ENCODE measurements at regions of chr20 and their contacts with region 1.

Region 1: GRCh38 chr20:39049684-39050554 is 87.8 kb downstream of the DHX35 start:
- DNase-seq: peak in 1 of 2 experiments; percentile 75
- H3K4me3 ChIP-seq: peak overlapping the region; percentile 97
- H3K27ac ChIP-seq: no peak overlapping the region
- H3K4me1 ChIP-seq: 0 out of 2 replicates have a peak, but pooled peaks cover 6% of the 10 kb centered on the region
- H3K27me3 ChIP-seq: peaks cover 20% of the 10 kb centered on the region; the same call in 1 of the 2 replicates
- CTCF ChIP-seq: peak; percentile 96

Region 2: DNA sequence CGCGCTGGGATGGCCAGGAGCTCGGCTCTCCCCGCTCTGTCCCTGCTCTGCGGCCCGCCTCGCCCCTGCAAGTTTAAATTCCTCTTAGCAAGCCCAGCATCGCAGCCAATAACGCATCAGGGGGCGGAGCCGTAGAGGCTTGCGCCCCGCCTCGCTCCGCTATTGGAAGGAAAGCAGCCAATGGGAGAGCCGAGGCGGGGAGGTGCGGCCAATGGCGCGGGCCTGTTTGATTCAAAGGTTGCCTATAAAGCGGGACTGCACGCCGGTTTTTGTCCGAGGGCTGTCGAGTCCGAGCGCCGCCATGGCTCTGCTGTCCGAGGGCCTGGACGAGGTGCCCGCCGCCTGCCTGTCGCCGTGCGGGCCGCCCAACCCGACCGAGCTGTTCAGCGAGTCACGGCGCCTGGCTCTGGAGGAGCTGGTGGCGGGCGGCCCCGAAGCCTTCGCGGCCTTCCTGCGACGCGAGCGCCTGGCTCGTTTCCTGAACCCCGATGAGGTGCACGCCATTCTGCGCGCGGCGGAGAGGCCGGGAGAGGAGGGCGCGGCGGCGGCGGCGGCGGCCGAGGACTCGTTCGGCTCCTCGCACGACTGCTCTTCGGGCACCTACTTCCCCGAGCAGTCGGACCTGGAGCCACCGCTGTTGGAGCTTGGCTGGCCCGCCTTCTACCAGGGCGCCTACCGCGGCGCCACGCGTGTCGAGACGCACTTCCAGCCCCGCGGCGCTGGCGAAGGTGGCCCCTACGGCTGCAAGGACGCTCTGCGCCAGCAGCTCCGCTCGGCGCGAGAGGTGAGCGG is 123.6 kb before region 1 on chr20 and contains the start of gene FAM83D:
- CTCF ChIA-PET with region 1: no interaction called
- POLR2A ChIA-PET with region 1: no interaction called
- intact Hi-C with region 1: loop called (anchors 1 kb)
- DNase-seq: peak; percentile 97 to 98
- H3K4me3 ChIP-seq: peak within 1 kb of the TSS; percentile 69
- H3K27ac ChIP-seq: no peak within 1 kb of the TSS
- H3K4me1 ChIP-seq: peaks cover 35% of the 10 kb centered on the region
- H3K27me3 ChIP-seq: peaks cover 5% of the 10 kb centered on the region
- CTCF ChIP-seq: no peak; the same call in 1 of the 2 replicates
- total RNA-seq, gene FAM83D: 44.6 and 57.3 TPM in 2 replicates

Region 3: GRCh38 chr20:38970302-38970701 is 79.6 kb before region 1 on chr20:
- CTCF ChIA-PET with region 1: no interaction called
- POLR2A ChIA-PET with region 1: no interaction called
- intact Hi-C with region 1: no loop called
- DNase-seq: peak in 1 of 2 experiments; percentile 81
- H3K4me3 ChIP-seq: no peak overlapping the region
- H3K27ac ChIP-seq: peak overlapping the region; percentile 70
- H3K4me1 ChIP-seq: peaks cover 8% of the 10 kb centered on the region; the same call in 1 of the 2 replicates
- H3K27me3 ChIP-seq: no peaks in the 10 kb centered on the region
- CTCF ChIP-seq: no peak

Region 4: GRCh38 chr20:38987777-38988176 is 62.1 kb before region 1 on chr20:
- CTCF ChIA-PET with region 1: no interaction called
- POLR2A ChIA-PET with region 1: no interaction called
- intact Hi-C with region 1: no loop called
- DNase-seq: no peak
- H3K4me3 ChIP-seq: no peak overlapping the region
- H3K27ac ChIP-seq: no peak overlapping the region
- H3K4me1 ChIP-seq: peaks cover 35% of the 10 kb centered on the region
- H3K27me3 ChIP-seq: no peaks in the 10 kb centered on the region
- CTCF ChIP-seq: no peak

Region 5: DNA sequence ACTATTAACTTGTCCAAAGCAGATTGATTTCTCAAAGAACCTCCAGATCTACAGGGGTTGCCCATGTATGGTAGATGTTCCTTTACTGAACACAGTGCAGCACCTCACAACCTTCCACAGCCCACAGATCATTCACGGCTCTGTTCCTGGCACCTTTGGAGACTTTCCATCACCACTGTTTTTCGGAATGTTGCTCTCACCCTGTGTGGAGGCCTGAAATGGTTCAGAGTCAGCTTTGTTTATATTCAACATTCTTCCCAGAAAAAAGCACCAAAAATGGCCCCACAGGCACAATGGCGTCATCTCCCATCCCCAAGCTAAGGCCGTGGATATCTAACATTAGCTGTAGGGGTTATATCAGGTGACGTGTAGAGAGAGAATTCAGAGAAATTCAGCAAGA is 13.1 kb before region 1 on chr20:
- CTCF ChIA-PET with region 1: interaction called, 19 read pairs
- POLR2A ChIA-PET with region 1: no interaction called
- intact Hi-C with region 1: no loop called
- DNase-seq: no peak
- H3K4me3 ChIP-seq: no peak overlapping the region
- H3K27ac ChIP-seq: no peak overlapping the region
- H3K4me1 ChIP-seq: no peaks in the 10 kb centered on the region
- H3K27me3 ChIP-seq: no peaks in the 10 kb centered on the region
- CTCF ChIP-seq: no peak

Region 6: GRCh38 chr20:39081255-39081654 is 31.3 kb after region 1 on chr20:
- CTCF ChIA-PET with region 1: no interaction called
- POLR2A ChIA-PET with region 1: no interaction called
- intact Hi-C with region 1: loop called (anchors 1 kb)
- DNase-seq: peak; percentile 50 to 70
- H3K4me3 ChIP-seq: no peak overlapping the region
- H3K27ac ChIP-seq: no peak overlapping the region
- H3K4me1 ChIP-seq: no peaks in the 10 kb centered on the region
- H3K27me3 ChIP-seq: peaks cover 76% of the 10 kb centered on the region
- CTCF ChIP-seq: peak; percentile 97

Region 7: GRCh38 chr20:39381596-39381995 is 331.7 kb after region 1 on chr20:
- CTCF ChIA-PET with region 1: no interaction called
- POLR2A ChIA-PET with region 1: no interaction called
- intact Hi-C with region 1: no loop called
- DNase-seq: no peak
- H3K4me3 ChIP-seq: no peak overlapping the region
- H3K27ac ChIP-seq: no peak overlapping the region
- H3K4me1 ChIP-seq: no peaks in the 10 kb centered on the region
- H3K27me3 ChIP-seq: peaks cover 16% of the 10 kb centered on the region
- CTCF ChIP-seq: no peak

Region 8: DNA sequence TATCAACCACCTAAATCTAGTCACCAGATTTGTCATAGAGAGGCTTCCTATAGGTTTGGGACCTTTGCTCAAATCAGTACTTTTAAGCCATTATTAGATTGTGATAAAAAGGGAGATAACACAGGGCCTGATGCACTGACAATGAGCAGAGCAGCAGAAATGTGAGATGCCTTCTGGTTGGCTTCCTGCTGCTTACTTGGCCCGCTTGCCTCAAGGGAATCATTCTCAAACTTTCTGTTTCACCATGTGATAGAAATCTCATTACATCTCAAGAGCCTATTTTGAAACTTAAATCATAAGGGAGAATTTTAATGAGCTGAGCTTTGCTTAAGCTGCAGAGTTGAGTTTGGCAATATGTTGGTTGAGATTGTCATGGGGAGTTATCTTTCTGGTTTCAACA is 518.2 kb after region 1 on chr20:
- CTCF ChIA-PET with region 1: no interaction called
- POLR2A ChIA-PET with region 1: no interaction called
- intact Hi-C with region 1: no loop called
- DNase-seq: no peak
- H3K4me3 ChIP-seq: no peak overlapping the region
- H3K27ac ChIP-seq: no peak overlapping the region
- H3K4me1 ChIP-seq: no peaks in the 10 kb centered on the region
- H3K27me3 ChIP-seq: no peaks in the 10 kb centered on the region; the same call in 1 of the 2 replicates
- CTCF ChIP-seq: no peak

Measured in PC-9 (cell line).